ENCODE measurements at regions of chr4 and their contacts with region 1.

Region 1: DNA sequence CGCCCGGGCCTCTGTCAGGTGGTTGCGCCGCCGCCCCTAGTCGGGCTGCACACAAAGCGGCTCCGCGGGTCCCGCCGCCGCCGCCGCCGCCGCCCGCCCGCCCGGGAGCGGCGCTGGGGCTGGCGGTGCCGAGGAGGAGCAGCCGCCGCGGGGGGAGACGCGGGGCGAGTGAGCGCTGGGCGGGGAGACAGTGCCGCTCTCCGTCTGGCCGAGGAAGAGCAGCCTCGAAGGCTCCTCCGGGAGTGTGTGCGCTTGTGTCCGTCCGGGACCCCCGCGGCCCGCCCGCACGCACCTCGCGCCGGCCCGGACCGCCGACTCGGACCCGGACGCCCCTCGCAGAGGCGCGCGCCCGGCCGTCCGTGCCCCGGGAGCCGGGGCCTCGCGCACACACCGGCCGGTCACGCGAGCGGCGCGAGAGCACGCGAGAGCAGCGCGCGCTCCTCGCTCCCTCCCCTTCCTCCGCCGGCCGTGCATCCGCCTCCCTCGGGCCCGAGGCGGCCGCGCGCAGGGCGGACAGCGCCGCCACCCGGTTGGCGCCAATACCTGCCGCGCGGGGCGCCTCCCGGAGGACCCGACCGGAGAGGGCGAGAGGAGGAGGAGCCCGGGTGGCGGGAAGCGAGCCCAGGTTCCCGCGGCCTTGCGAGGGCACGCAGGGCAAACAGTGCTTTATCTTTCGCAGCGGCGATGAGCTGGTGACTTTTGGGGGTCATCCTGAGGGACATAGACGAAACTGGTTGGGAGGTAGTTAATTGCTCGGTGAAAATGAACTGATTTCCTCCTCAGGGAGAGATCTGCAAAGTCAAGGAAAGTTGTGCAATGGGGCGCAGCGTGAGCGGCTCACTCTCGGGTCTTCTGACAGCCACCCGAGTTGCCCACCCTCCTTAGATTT is at the start of gene PDS5A:
- DNase-seq: peak; percentile 85
- H3K4me3 ChIP-seq: peak within 1 kb of the TSS; percentile 82 to 93
- H3K27ac ChIP-seq: peak within 1 kb of the TSS; percentile 97
- H3K4me1 ChIP-seq: peaks cover 8% of the 10 kb centered on the region
- H3K27me3 ChIP-seq: no peaks in the 10 kb centered on the region
- CTCF ChIP-seq: peak; percentile 78 to 98 (median 96)
- POLR2A ChIP-seq: no peak
- total RNA-seq, gene PDS5A: 61.3 to 61.7 TPM

Region 2: GRCh38 chr4:39458505-39459300 is 519.0 kb before region 1 on chr4 and contains the starts of genes LIAS and RPL9:
- intact Hi-C with region 1: loop called (anchors 5 kb)
- DNase-seq: peak; percentile 97
- H3K4me3 ChIP-seq: peak within 1 kb of the TSS; percentile 65 to 86
- H3K27ac ChIP-seq: peak within 1 kb of the TSS; percentile 93
- H3K4me1 ChIP-seq: peaks cover 17% of the 10 kb centered on the region
- H3K27me3 ChIP-seq: no peaks in the 10 kb centered on the region
- CTCF ChIP-seq: peak in 2 of 3 experiments; percentile 9 to 18
- POLR2A ChIP-seq: peak; percentile 78
- total RNA-seq, gene LIAS: 24.0 to 31.1 TPM
- total RNA-seq, gene RPL9: 755 to 1,313 TPM

Region 3: DNA sequence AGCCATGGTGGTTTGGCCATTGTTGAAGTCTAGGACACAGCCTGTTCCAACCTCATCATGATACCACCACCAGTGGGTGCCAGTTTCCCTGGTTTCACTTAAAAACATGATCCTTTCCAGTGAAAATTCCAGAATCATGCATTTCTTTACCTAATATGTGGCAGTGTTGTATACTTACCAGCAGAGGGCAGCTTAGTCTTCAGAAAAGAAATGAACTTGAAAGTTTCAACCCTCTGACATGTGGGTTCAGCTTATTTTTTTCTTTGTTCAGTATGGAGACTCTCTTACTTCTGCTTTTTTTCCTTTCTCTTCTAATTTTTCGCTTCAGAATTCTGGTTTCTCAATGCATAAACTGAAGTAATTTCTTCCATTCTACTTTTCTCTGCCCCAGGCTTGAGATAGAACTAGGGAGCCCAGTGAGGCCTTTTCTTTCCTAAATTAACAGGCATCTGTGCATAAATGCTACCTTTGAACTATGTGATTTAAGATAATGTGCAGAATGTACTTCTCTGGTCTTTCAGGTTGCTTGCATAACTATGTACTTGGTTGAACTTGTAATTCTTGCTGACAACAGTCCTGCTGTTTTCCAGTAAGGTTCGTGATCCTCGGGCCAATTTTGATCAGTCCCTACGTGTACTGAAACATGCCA is 508.2 kb before region 1 on chr4:
- intact Hi-C with region 1: loop called (anchors 5 kb)
- DNase-seq: peak; percentile 75
- H3K4me3 ChIP-seq: no peak overlapping the region
- H3K27ac ChIP-seq: peak overlapping the region; percentile 28 to 36
- H3K4me1 ChIP-seq: no peaks in the 10 kb centered on the region
- H3K27me3 ChIP-seq: no peaks in the 10 kb centered on the region
- CTCF ChIP-seq: peak; percentile 86 to 96 (median 86)
- POLR2A ChIP-seq: no peak

Region 4: DNA sequence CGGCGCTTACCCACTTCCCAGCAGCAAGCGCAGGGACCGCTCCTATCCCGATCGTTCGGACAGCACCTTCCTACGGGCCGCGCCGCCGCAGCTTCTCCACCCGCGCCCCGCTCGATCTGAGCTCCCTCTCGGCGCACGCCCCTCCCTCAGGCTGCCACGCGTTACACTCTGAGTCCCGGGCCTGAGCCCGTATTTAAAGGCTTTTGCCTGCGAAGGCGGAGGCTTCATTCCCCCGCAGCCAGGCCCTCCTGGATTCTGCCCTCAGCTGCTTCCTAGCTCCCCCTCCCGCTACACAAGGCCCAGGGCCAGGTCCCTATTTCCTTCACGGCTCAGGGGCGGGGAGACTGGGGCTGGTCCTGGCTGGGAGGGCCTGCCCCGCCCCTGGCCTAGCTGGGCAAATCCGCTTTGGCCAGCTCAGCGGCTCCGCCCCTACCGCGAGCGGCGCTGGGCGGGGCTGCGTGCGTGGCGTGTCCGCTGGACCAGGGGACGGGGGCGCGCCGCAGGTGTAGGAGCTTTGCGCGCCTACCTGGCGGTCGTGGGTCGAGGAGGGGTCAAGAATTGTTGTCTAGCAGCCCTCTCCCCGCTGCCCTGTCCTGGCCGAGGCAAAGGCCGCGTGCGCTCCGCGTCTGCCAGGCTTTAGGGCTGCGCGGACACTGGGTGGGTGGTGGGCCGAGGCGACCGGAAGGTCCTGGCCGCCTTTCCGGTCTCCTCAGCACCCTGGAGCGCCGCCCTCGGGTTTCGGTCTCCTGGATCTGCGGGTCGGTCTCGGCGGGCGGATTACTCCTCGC is 450.3 kb before region 1 on chr4 and contains the start of gene UGDH:
- intact Hi-C with region 1: loop called (anchors 5 kb)
- DNase-seq: peak; percentile 97
- H3K4me3 ChIP-seq: peak within 1 kb of the TSS; percentile 82 to 93
- H3K27ac ChIP-seq: peak within 1 kb of the TSS; percentile 90 to 96
- H3K4me1 ChIP-seq: peaks cover 9% of the 10 kb centered on the region
- H3K27me3 ChIP-seq: no peaks in the 10 kb centered on the region
- CTCF ChIP-seq: peak in 1 of 3 experiments; percentile 8
- POLR2A ChIP-seq: peak; percentile 73
- total RNA-seq, gene UGDH: 11.3 to 21.4 TPM

Region 5: GRCh38 chr4:39697740-39698423 is 279.9 kb before region 1 on chr4 and contains the start of gene UBE2K:
- intact Hi-C with region 1: loop called (anchors 5 kb)
- DNase-seq: peak; percentile 88
- H3K4me3 ChIP-seq: peak within 1 kb of the TSS; percentile 82 to 92
- H3K27ac ChIP-seq: peak within 1 kb of the TSS; percentile 92 to 98
- H3K4me1 ChIP-seq: peaks cover 6% of the 10 kb centered on the region
- H3K27me3 ChIP-seq: no peaks in the 10 kb centered on the region
- CTCF ChIP-seq: no peak
- POLR2A ChIP-seq: no peak
- total RNA-seq, gene UBE2K: 23.0 to 24.3 TPM